HCT116 (cell line): ENCODE measurements at regions of chr1 and their contacts with region 1.

Region 1: GRCh38 chr1:237736372-237737029 is 154.2 kb downstream of the ZP4 start:
- DNase-seq: no peak
- ATAC-seq: no peak
- H3K4me3 ChIP-seq: no peak overlapping the region
- H3K27ac ChIP-seq: no peak overlapping the region
- H3K4me1 ChIP-seq: no peaks in the 10 kb centered on the region
- H3K27me3 ChIP-seq: no peaks in the 10 kb centered on the region
- CTCF ChIP-seq: no peak
- POLR2A ChIP-seq: no peak
- RAD21 ChIP-seq: no peak

Region 2: DNA sequence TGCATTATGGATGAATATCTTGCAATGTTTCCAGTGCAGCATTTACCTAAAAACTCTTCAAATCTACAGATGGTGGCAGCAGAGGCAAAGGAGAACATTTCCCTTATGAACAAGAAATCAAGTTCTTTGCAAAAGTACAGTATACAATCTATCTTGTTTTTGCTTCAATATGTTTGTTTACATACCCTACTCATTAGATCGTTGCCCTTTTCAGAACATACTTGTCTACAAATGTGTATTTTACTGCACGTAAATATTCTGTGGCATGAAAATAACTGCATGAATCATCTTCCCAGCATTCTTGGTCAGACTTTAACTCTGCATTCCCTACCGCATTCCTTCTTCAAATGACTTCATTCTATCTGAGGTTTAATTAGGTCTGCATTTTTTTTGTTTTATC is 58.5 kb before region 1 on chr1:
- CTCF ChIA-PET with region 1: no interaction called
- POLR2A ChIA-PET with region 1: no interaction called
- RAD21 ChIA-PET with region 1: no interaction called
- intact Hi-C with region 1: loop called (anchors 10 kb)
- DNase-seq: no peak
- ATAC-seq: no peak
- H3K4me3 ChIP-seq: no peak overlapping the region
- H3K27ac ChIP-seq: no peak overlapping the region
- H3K4me1 ChIP-seq: no peaks in the 10 kb centered on the region
- H3K27me3 ChIP-seq: no peaks in the 10 kb centered on the region
- CTCF ChIP-seq: no peak
- POLR2A ChIP-seq: no peak
- RAD21 ChIP-seq: no peak

Region 3: GRCh38 chr1:237748171-237748960 is 11.9 kb after region 1 on chr1:
- CTCF ChIA-PET with region 1: no interaction called
- POLR2A ChIA-PET with region 1: no interaction called
- RAD21 ChIA-PET with region 1: no interaction called
- intact Hi-C with region 1: no loop called
- DNase-seq: no peak
- ATAC-seq: no peak
- H3K4me3 ChIP-seq: no peak overlapping the region
- H3K27ac ChIP-seq: no peak overlapping the region
- H3K4me1 ChIP-seq: no peaks in the 10 kb centered on the region
- H3K27me3 ChIP-seq: no peaks in the 10 kb centered on the region
- CTCF ChIP-seq: no peak
- POLR2A ChIP-seq: no peak
- RAD21 ChIP-seq: no peak

Region 4: DNA sequence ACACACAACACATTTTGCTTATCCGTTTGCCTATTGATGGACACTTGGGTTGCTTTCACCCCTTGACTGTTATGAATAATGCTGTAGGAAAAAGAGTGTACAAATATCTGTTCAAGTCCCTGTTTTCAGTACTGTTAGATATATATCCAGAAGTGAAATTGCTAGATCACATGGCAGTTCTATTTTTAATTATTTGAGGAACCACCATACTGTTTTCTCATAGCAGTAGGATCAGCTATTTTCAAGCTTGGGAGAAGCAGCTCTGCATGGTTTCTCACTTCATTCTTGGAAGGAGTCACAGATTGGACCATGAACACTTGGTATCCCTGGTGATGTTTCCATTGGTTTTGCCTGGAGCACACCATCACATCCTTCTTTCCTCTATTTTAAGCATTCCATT is 268.6 kb after region 1 on chr1:
- CTCF ChIA-PET with region 1: no interaction called
- POLR2A ChIA-PET with region 1: no interaction called
- RAD21 ChIA-PET with region 1: no interaction called
- intact Hi-C with region 1: no loop called
- DNase-seq: no peak
- ATAC-seq: no peak
- H3K4me3 ChIP-seq: no peak overlapping the region
- H3K27ac ChIP-seq: no peak overlapping the region
- H3K4me1 ChIP-seq: no peaks in the 10 kb centered on the region
- H3K27me3 ChIP-seq: no peaks in the 10 kb centered on the region
- CTCF ChIP-seq: no peak
- POLR2A ChIP-seq: no peak
- RAD21 ChIP-seq: no peak

Region 5: GRCh38 chr1:238384381-238384780 is 647.9 kb after region 1 on chr1:
- CTCF ChIA-PET with region 1: no interaction called
- POLR2A ChIA-PET with region 1: no interaction called
- RAD21 ChIA-PET with region 1: no interaction called
- intact Hi-C with region 1: no loop called
- DNase-seq: no peak
- ATAC-seq: no peak
- H3K4me3 ChIP-seq: no peak overlapping the region
- H3K27ac ChIP-seq: no peak overlapping the region
- H3K4me1 ChIP-seq: no peaks in the 10 kb centered on the region
- H3K27me3 ChIP-seq: no peaks in the 10 kb centered on the region
- CTCF ChIP-seq: no peak
- POLR2A ChIP-seq: no peak
- RAD21 ChIP-seq: no peak